ENCODE measurements at regions of chr4 and their contacts with region 1.

Region 1: GRCh38 chr4:155675709-155676429 is 9.2 kb downstream of the GUCY1A1 start:
- DNase-seq: no peak
- H3K4me3 ChIP-seq: no peak overlapping the region
- H3K27ac ChIP-seq: peak overlapping the region; percentile 40
- H3K4me1 ChIP-seq: peaks cover 26% of the 10 kb centered on the region
- H3K27me3 ChIP-seq: no peaks in the 10 kb centered on the region
- CTCF ChIP-seq: no peak
- POLR2A ChIP-seq: no peak

Region 2: GRCh38 chr4:155252327-155252726 is 423.5 kb before region 1 on chr4:
- intact Hi-C with region 1: no loop called
- DNase-seq: no peak
- H3K4me3 ChIP-seq: no peak overlapping the region
- H3K27ac ChIP-seq: no peak overlapping the region
- H3K4me1 ChIP-seq: no peaks in the 10 kb centered on the region
- H3K27me3 ChIP-seq: no peaks in the 10 kb centered on the region
- CTCF ChIP-seq: no peak
- POLR2A ChIP-seq: no peak

Region 3: GRCh38 chr4:155529272-155529671 is 146.6 kb before region 1 on chr4:
- intact Hi-C with region 1: loop called (anchors 10 kb)
- DNase-seq: no peak
- H3K4me3 ChIP-seq: no peak overlapping the region
- H3K27ac ChIP-seq: no peak overlapping the region
- H3K4me1 ChIP-seq: no peaks in the 10 kb centered on the region
- H3K27me3 ChIP-seq: no peaks in the 10 kb centered on the region
- CTCF ChIP-seq: no peak
- POLR2A ChIP-seq: no peak

Measured in vagina (tissue), 2 donors.